ENCODE measurements at regions of chr3 and their contacts with region 1.

Region 1: DNA sequence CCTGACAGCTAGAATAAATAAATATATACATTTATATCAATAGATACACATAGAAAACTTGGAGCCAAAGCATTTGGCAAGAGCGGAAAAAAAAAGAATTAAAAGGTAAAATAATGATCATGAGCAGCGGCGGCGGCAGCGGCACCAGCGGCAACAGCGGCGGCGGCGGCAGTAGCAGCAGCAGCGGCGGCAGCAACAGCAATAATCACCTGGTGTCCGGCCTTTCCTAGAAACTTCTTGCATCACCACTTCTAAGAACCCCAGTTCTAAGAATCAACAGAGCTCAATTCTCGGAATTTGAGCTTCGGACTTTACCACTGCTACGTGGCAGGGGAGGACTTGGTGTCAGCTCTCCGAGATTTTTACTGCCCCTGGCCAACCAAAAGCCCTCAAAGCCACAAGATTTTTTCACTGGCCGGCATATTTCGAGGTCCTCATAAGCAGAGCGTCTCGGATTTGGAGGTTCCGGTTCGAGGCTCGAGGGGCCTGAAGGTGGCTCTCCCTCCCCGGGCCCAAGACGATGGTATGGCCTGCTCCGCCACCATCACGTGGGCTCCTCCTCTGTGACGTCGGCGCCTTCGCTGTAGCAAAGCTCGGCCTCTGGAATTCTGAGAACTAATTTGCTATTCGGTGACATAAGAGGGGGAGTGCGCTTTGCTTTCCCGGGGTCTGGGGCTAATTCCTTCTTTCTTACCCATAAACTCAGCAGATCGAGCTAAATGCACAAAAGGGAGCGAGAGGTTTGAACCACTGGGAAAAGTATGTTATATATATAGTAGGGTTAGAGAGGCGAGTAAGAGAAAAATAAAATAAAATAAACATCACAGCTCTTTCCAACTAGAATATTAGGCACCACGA is at the start of gene BCL6:
- DNase-seq: peak; percentile 92 to 99
- H3K4me3 ChIP-seq: peak within 1 kb of the TSS; percentile 88
- H3K27ac ChIP-seq: peak within 1 kb of the TSS; percentile 94
- H3K4me1 ChIP-seq: peaks cover 48% of the 10 kb centered on the region
- H3K27me3 ChIP-seq: no peaks in the 10 kb centered on the region
- CTCF ChIP-seq: 0 out of 2 replicates have a peak, but pooled peaks have one; percentile 19
- total RNA-seq, gene BCL6: 37.1 and 42.2 TPM in 2 replicates

Region 2: DNA sequence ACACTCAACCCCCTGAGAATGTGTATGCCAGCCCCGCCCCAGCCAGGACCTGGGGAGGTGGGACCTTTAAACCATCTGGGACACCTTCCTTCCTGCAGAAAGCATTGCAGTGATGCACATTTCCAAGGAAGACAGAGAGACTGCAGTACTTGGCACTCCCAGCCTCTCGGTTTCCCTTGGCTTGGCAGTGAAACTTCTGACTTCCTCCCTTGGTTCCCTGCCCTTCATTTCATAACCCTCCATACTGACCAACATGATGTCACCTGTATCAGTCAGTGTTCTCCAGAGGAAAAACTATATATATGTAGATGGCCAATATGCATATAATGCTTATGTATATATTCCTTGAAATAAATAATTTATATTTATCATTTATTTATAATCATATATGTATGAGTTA is 178.4 kb before region 1 on chr3:
- CTCF ChIA-PET with region 1: no interaction called
- POLR2A ChIA-PET with region 1: no interaction called
- intact Hi-C with region 1: no loop called
- DNase-seq: no peak
- H3K4me3 ChIP-seq: no peak overlapping the region
- H3K27ac ChIP-seq: no peak overlapping the region
- H3K4me1 ChIP-seq: no peaks in the 10 kb centered on the region
- H3K27me3 ChIP-seq: peaks cover 22% of the 10 kb centered on the region
- CTCF ChIP-seq: no peak

Region 3: GRCh38 chr3:187783098-187783497 is 37.7 kb after region 1 on chr3:
- CTCF ChIA-PET with region 1: no interaction called
- POLR2A ChIA-PET with region 1: interaction called, 23 read pairs
- intact Hi-C with region 1: no loop called
- DNase-seq: peak; percentile 47 to 98
- H3K4me3 ChIP-seq: no peak overlapping the region
- H3K27ac ChIP-seq: peak overlapping the region; percentile 62
- H3K4me1 ChIP-seq: peaks cover 23% of the 10 kb centered on the region
- H3K27me3 ChIP-seq: no peaks in the 10 kb centered on the region
- CTCF ChIP-seq: no peak

Region 4: GRCh38 chr3:187906416-187906815 is 161.0 kb after region 1 on chr3:
- CTCF ChIA-PET with region 1: no interaction called
- POLR2A ChIA-PET with region 1: no interaction called
- intact Hi-C with region 1: no loop called
- DNase-seq: no peak
- H3K4me3 ChIP-seq: no peak overlapping the region
- H3K27ac ChIP-seq: no peak overlapping the region
- H3K4me1 ChIP-seq: peaks cover 12% of the 10 kb centered on the region
- H3K27me3 ChIP-seq: no peaks in the 10 kb centered on the region
- CTCF ChIP-seq: no peak

Region 5: GRCh38 chr3:187946163-187946691 is 200.8 kb after region 1 on chr3:
- CTCF ChIA-PET with region 1: interaction called, 5 read pairs
- POLR2A ChIA-PET with region 1: interaction called, 17 read pairs
- intact Hi-C with region 1: loop called (anchors 1 kb)
- DNase-seq: peak in 1 of 2 experiments; percentile 57
- H3K4me3 ChIP-seq: peak overlapping the region; percentile 45; the same call in 1 of the 2 replicates
- H3K27ac ChIP-seq: peak overlapping the region; percentile 94
- H3K4me1 ChIP-seq: peaks cover 67% of the 10 kb centered on the region
- H3K27me3 ChIP-seq: no peaks in the 10 kb centered on the region
- CTCF ChIP-seq: no peak

Region 6: DNA sequence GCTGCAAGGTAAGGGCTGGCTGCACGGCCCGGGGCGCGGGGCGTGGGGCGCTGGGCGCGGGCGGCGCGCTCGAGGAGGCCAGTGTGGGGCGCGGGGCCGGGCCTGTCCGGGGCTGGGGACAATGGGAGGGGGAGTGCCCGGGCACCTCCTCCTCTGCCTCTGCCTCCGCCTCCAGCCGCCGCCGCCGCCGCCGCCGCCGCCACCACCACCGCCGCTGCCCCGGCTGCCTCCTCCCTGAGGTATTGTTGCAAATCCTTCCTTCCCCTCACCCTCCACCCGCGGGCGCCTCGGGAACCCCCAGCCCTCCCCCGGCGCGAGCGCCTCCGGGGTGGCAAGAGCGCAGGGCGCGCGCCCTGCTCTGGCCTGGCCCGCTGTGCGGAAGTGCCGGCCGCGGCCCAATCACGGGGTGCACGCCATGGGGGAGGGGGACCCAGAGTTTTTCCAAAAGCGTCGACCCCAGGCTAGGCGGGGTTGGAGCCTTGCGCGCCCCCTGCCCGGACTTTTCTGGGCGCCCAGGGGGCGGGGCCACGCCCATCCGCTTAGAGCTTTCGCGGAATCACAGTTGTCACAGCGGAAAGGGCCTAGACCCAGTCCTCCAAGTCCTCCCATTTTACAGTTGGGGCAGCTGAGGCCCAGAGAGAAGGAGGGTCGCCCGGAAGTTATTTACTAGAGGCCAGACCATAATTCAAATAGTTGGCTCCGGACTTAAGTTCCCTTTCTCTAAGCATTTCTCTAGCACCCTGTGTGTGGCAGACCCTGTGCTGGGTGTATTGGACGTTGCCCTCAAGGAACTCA is 408.8 kb after region 1 on chr3 and contains the start of gene LPP:
- CTCF ChIA-PET with region 1: interaction called, 3 read pairs
- POLR2A ChIA-PET with region 1: interaction called, 8 read pairs
- intact Hi-C with region 1: loop called (anchors 1 kb)
- DNase-seq: peak; percentile 63 to 95
- H3K4me3 ChIP-seq: peak within 1 kb of the TSS; percentile 81
- H3K27ac ChIP-seq: peak within 1 kb of the TSS; percentile 78
- H3K4me1 ChIP-seq: peaks cover 49% of the 10 kb centered on the region
- H3K27me3 ChIP-seq: no peaks in the 10 kb centered on the region
- CTCF ChIP-seq: no peak
- total RNA-seq, gene LPP: 113 and 148 TPM in 2 replicates

Region 7: DNA sequence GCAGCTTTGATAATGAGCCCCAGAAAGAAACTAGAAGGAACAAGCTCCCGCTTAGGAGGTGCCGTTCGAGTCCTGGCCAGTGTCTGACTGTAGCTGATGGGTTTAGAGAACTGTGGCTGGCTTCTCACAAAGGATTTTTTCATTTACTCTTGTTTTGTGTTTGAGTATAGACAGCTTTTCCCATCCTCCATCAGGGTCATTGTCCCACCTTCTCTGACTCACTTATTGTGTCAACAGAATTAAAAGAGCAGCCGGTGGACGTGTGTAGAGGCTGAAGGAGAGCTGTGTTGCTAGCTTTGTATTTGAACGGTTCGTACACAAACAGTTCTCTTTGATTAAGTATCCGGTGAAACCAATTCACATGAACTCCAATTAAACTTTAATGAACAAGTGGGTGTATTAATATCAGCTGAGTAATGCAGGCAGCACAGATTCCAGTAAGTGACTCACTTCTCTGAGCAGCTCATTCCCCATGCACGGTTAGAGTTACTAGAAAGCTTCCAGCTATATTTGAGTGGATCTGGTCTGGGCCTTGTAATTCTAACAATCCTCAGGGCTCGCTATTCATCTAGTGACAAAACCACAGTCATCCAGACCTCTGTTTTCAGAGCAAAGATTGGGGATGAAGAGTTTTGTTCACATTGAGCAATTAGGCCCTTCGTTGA is 549.5 kb after region 1 on chr3:
- CTCF ChIA-PET with region 1: interaction called, 4 read pairs
- POLR2A ChIA-PET with region 1: interaction called, 3 read pairs
- intact Hi-C with region 1: loop called (anchors 2 kb)
- DNase-seq: peak; percentile 63 to 99
- H3K4me3 ChIP-seq: peak overlapping the region; percentile 8; the same call in 1 of the 2 replicates
- H3K27ac ChIP-seq: peak overlapping the region; percentile 77
- H3K4me1 ChIP-seq: peaks cover 55% of the 10 kb centered on the region
- H3K27me3 ChIP-seq: no peaks in the 10 kb centered on the region
- CTCF ChIP-seq: no peak

Region 8: GRCh38 chr3:188683032-188683521 is 937.6 kb after region 1 on chr3:
- CTCF ChIA-PET with region 1: interaction called, 4 read pairs
- POLR2A ChIA-PET with region 1: interaction called, 9 read pairs
- intact Hi-C with region 1: loop called (anchors 1 kb)
- DNase-seq: peak; percentile 39 to 64
- H3K4me3 ChIP-seq: no peak overlapping the region
- H3K27ac ChIP-seq: peak overlapping the region; percentile 11; the same call in 1 of the 2 replicates
- H3K4me1 ChIP-seq: peaks cover 38% of the 10 kb centered on the region
- H3K27me3 ChIP-seq: no peaks in the 10 kb centered on the region
- CTCF ChIP-seq: no peak